ENCODE measurements at regions of chr1 and their contacts with region 1.

Region 1: DNA sequence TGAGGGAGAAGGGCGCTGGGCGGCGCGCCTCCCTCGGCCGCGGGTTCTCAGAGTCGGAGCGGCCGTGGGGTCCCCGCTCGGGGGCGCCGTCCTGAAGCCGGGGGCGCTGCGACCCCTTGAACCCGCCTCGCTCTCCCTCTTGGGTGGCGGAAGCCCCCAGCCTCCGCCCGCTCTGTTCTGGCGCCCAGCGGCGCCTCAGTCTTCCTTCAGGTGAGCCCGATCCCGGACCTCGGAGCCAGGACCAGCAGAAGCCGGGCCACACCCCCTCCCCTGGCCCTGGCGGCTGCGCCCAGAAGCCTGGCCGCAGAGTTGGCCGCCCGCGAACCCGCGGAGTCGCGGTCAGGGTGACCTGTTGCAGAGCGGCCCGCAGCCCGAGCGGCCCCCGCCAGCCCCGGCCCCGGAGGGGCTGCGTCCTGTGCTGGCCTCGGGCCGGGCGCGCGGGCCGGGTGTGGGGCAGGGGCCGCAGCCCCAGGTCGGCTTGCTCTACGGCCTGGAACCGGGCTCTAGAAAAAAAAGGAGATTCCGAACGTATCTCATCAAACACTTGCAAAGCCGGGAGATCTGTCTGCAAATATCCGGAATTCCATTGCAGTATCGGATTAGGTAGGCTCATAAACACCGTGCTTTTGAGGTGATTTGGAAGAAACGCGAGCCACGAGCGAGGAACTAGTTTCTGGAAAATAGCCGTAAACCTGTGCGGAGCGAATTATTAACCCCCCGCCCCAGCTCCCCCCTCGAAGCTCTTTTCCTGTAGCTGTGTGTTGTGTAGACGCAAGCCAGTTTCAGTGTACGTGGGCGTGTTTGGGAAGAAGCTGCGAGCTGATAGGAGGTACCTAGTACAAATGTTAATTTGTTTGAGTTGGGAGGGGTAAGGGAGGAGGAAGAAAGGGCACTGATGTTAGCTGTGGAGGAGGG is 816 bp downstream of the RALGPS2 start:
- ATAC-seq: peak; percentile 59 to 79 (median 64)
- H3K4me3 ChIP-seq: peak overlapping the region; percentile 80 to 94 (median 87)
- H3K27ac ChIP-seq: peak overlapping the region; percentile 82 to 84
- H3K4me1 ChIP-seq: peaks cover 10 to 22% of the 10 kb centered on the region in 2 donors

Region 2: GRCh38 chr1:178566187-178566586 is 159.7 kb before region 1 on chr1:
- in situ Hi-C with region 1: loop called in 1 of 9 experiments (anchors 25 kb)
- ATAC-seq: no peak
- H3K4me3 ChIP-seq: no peak overlapping the region
- H3K27ac ChIP-seq: no peak overlapping the region
- H3K4me1 ChIP-seq: peaks cover 6 to 10% of the 10 kb centered on the region in 2 donors

Measured in motor neuron (in vitro differentiated cells).